IMR-90 (cell line): ENCODE measurements at regions of chr9 and their contacts with region 1.

Region 1: GRCh38 chr9:137445275-137445807 is 4.2 kb upstream of the ENTPD8 start:
- DNase-seq: peak; percentile 76
- ATAC-seq: peak; percentile 94
- H3K4me3 ChIP-seq: no peak overlapping the region
- H3K27ac ChIP-seq: no peak overlapping the region
- H3K4me1 ChIP-seq: peaks cover 2% of the 10 kb centered on the region; the same call in 1 of the 2 replicates
- H3K27me3 ChIP-seq: peaks cover 3% of the 10 kb centered on the region; the same call in 1 of the 2 replicates
- CTCF ChIP-seq: peak; percentile 86
- POLR2A ChIP-seq: no peak
- RAD21 ChIP-seq: peak; percentile 71

Region 2: GRCh38 chr9:137286975-137287383 is 158.4 kb before region 1 on chr9:
- CTCF ChIA-PET with region 1: no interaction called
- POLR2A ChIA-PET with region 1: no interaction called
- dilution Hi-C with region 1: no loop called
- in situ Hi-C with region 1: no loop called
- intact Hi-C with region 1: loop called (anchors 2 kb)
- DNase-seq: peak; percentile 59
- ATAC-seq: peak; percentile 92
- H3K4me3 ChIP-seq: no peak overlapping the region
- H3K27ac ChIP-seq: no peak overlapping the region
- H3K4me1 ChIP-seq: no peaks in the 10 kb centered on the region
- H3K27me3 ChIP-seq: no peaks in the 10 kb centered on the region
- CTCF ChIP-seq: peak; percentile 55
- POLR2A ChIP-seq: no peak
- RAD21 ChIP-seq: peak; percentile 64